ENCODE measurements at regions of chr14 and their contacts with region 1.

Region 1: GRCh38 chr14:22386924-22387775 is 201.9 kb downstream of the DAD1 start:
- DNase-seq: peak in 1 of 2 donors; percentile 80
- ATAC-seq: peak in 7 of 8 donors; percentile 51 to 76 (median 62)
- H3K4me3 ChIP-seq: no peak overlapping the region
- H3K27ac ChIP-seq: no peak overlapping the region
- H3K4me1 ChIP-seq: peaks cover 0 to 12% (median 0%) of the 10 kb centered on the region in 9 donors
- H3K27me3 ChIP-seq: peaks cover 0 to 27% (median 19%) of the 10 kb centered on the region in 7 donors
- CTCF ChIP-seq: peak; percentile 66 to 87 (median 81)

Region 2: GRCh38 chr14:22549981-22550673 is 163.0 kb after region 1 on chr14:
- intact Hi-C with region 1: loop called (anchors 5 to 10 kb)
- DNase-seq: no peak
- ATAC-seq: peak in 1 of 8 donors; percentile 24
- H3K4me3 ChIP-seq: peak overlapping the region in 1 of 10 donors; percentile 15
- H3K27ac ChIP-seq: peak overlapping the region in 6 of 10 donors; percentile 20 to 82 (median 38)
- H3K4me1 ChIP-seq: peaks cover 0 to 72% (median 30%) of the 10 kb centered on the region in 9 donors
- H3K27me3 ChIP-seq: no peaks in the 10 kb centered on the region
- CTCF ChIP-seq: no peak

Region 3: GRCh38 chr14:22715186-22715812 is 328.1 kb after region 1 on chr14:
- intact Hi-C with region 1: loop called in 1 of 10 experiments (anchors 5 kb)
- DNase-seq: no peak
- ATAC-seq: no peak
- H3K4me3 ChIP-seq: no peak overlapping the region
- H3K27ac ChIP-seq: no peak overlapping the region
- H3K4me1 ChIP-seq: peaks cover 0 to 10% (median 0%) of the 10 kb centered on the region in 9 donors
- H3K27me3 ChIP-seq: peaks cover 0 to 32% (median 14%) of the 10 kb centered on the region in 7 donors
- CTCF ChIP-seq: no peak

Region 4: DNA sequence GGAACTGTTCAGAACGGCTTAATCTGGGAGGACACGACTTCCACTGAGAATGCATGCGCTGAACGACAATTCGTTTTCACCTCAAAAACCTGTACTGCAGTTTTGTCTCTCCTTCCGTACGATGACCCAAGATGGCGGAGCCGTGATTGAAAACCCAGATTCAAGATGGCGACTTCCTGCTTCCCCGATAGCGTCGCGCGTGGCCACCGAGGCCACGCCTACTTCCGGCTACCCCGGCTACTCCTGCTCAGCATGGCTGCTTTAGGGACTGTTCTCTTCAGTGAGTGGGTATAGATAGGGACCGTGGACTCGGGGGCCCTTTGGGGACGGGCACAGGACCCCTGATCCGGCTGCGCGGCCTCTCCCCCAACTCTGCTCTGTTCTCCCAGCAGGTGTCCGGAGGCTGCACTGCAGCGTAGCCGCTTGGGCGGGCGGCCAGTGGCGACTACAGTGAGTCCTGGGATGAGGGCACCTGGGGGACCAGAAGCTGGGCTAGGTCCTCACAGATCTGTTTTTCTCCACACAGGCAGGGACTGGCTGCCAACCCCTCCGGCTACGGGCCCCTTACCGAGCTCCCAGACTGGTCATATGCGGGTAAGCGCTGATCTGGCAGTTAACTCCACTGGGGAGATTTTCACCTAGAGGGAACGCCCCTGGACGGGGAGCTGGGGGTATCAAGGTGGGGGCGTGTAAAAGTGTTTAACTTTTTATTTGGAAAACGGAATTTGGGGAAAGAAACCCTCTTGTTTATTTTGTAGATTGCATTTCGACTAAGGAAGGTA is 442.7 kb after region 1 on chr14 and contains the start of gene MRPL52:
- intact Hi-C with region 1: loop called in 1 of 10 experiments (anchors 10 kb)
- DNase-seq: peak; percentile 90 to 91
- ATAC-seq: peak; percentile 96 to 98 (median 98)
- H3K4me3 ChIP-seq: peak within 1 kb of the TSS; percentile 63 to 94 (median 82)
- H3K27ac ChIP-seq: peak within 1 kb of the TSS in 9 of 10 donors; percentile 78 to 92 (median 84)
- H3K4me1 ChIP-seq: peaks cover 0 to 17% (median 11%) of the 10 kb centered on the region in 9 donors
- H3K27me3 ChIP-seq: no peaks in the 10 kb centered on the region
- CTCF ChIP-seq: no peak
- total RNA-seq, gene MRPL52: 90.1 to 117 (median 106) TPM